ENCODE measurements at regions of chr1 and their contacts with region 1.

Region 1: DNA sequence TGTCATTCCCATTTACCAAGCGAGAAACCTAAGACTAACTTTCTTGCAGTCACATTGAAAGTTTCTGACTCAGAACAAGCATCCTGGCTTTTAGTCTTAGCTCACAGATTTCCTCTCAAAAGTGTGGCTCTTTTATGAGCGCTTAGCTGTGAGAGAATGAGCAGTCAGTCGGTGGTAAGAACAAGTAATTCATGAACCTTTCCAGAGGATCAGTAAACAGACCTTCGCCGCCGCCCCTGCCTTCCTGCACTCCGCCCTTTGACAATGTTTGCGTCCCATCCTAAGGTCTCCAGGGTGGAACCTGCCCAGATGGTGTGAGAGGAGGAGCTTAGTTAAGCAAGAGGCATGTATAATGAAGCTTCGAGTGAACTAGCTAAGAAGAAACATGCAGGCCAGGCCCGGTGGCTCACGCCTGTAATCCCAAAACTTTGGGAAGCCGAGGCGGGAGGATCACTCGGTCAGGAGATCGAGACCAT is 142.4 kb downstream of the GLUL start:
- DNase-seq: peak; percentile 53
- H3K4me3 Mint-ChIP-seq: no peak overlapping the region
- H3K27ac Mint-ChIP-seq: peak overlapping the region; percentile 86
- H3K4me1 Mint-ChIP-seq: peaks cover 29% of the 10 kb centered on the region
- H3K27me3 Mint-ChIP-seq: no peaks in the 10 kb centered on the region

Region 2: GRCh38 chr1:182029379-182030331 is 219.6 kb before region 1 on chr1:
- intact Hi-C with region 1: loop called (anchors 1 kb)
- DNase-seq: peak; percentile 95
- H3K4me3 Mint-ChIP-seq: peak overlapping the region; percentile 91
- H3K27ac Mint-ChIP-seq: peak overlapping the region; percentile 94
- H3K4me1 Mint-ChIP-seq: peaks cover 12% of the 10 kb centered on the region
- H3K27me3 Mint-ChIP-seq: peaks cover 3% of the 10 kb centered on the region

Region 3: DNA sequence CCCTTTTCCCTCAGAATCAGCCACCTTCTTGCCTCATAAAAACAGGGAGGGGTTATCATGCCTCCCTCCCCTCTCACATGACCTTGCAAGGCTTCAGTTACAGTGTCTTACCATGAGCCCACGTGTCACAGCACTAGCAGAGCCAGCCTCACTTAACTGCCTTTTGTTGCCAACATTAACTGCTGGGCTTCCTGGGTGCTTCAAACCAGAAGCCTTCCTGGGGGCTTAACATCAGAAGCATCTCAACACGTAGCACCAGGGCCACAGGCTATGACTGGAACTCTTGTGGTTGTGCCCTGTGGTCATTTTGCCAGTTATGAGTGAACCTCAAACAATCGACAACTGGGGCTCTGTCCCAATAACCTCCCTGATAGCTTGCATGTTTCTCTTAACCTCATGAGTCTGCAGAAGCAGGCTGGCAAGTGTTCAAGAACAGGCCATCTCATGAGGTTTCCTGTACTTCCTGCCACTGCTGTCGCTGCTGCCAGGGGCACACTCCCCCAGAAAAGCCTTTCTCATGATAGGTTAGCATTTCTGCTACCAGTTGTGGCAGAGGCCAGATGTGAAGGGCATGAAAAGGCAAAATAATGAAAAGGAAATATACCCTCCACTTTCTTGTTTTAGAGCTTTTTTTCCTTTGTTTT is 10.1 kb after region 1 on chr1:
- intact Hi-C with region 1: loop called (anchors 1 kb)
- DNase-seq: peak; percentile 55
- H3K4me3 Mint-ChIP-seq: no peak overlapping the region
- H3K27ac Mint-ChIP-seq: peak overlapping the region; percentile 89
- H3K4me1 Mint-ChIP-seq: peaks cover 24% of the 10 kb centered on the region
- H3K27me3 Mint-ChIP-seq: no peaks in the 10 kb centered on the region

Region 4: GRCh38 chr1:182430263-182431068 is 181.2 kb after region 1 on chr1:
- intact Hi-C with region 1: loop called (anchors 10 kb)
- DNase-seq: peak; percentile 47
- H3K4me3 Mint-ChIP-seq: no peak overlapping the region
- H3K27ac Mint-ChIP-seq: peak overlapping the region; percentile 72
- H3K4me1 Mint-ChIP-seq: peaks cover 28% of the 10 kb centered on the region
- H3K27me3 Mint-ChIP-seq: peaks cover 4% of the 10 kb centered on the region

Region 5: DNA sequence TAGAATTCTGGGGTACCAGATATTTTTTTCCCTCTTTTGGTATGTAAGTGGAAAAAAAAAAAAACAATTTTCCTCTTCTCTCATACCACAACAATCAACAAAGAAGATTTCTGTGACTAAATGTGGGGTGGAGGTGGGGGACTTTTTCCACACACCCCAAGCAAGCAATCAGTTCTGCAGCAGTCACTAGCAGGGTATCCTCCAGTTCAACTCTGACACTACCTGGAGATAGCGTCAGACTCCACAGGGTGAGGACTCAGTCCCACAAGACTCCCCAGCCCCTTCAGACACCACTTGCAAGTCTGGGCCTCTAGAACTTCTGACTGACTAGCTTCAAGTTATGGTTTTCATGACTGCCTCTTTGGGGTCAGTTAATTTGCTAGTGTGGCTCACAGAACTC is 596.1 kb after region 1 on chr1:
- intact Hi-C with region 1: loop called (anchors 2 kb)
- DNase-seq: no peak
- H3K4me3 Mint-ChIP-seq: peak overlapping the region; percentile 54
- H3K27ac Mint-ChIP-seq: peak overlapping the region; percentile 85
- H3K4me1 Mint-ChIP-seq: peaks cover 90% of the 10 kb centered on the region
- H3K27me3 Mint-ChIP-seq: no peaks in the 10 kb centered on the region

Measured in activated T-helper 1 cell treated with anti-CD3 and anti-CD28 coated beads, Interleukin-12 subunit alpha, Interleukin-12 subunit beta, Interleukin-2, Interleukin-4 antibody, amounts not matched to agents 30 ng/mL and 10 ng/mL and 1 ng/mL, durations not matched to agents 14 hours and 24 hours and 36 hours (primary cell).